Activated naive CD4-positive, alpha-beta T cell treated with anti-CD3 and anti-CD28 coated beads, Interleukin-2, amount 10 ng/mL, durations not matched to agents 7 days and 5 days (primary cell): ENCODE measurements at regions of chr17 and their contacts with region 1.

Region 1: GRCh38 chr17:59753522-59754467 is 46.3 kb downstream of the VMP1 start:
- DNase-seq: peak; percentile 37
- H3K4me3 Mint-ChIP-seq: peak overlapping the region; percentile 65
- H3K27ac Mint-ChIP-seq: peak overlapping the region; percentile 89
- H3K4me1 Mint-ChIP-seq: peaks cover 70% of the 10 kb centered on the region
- H3K27me3 Mint-ChIP-seq: no peaks in the 10 kb centered on the region

Region 2: DNA sequence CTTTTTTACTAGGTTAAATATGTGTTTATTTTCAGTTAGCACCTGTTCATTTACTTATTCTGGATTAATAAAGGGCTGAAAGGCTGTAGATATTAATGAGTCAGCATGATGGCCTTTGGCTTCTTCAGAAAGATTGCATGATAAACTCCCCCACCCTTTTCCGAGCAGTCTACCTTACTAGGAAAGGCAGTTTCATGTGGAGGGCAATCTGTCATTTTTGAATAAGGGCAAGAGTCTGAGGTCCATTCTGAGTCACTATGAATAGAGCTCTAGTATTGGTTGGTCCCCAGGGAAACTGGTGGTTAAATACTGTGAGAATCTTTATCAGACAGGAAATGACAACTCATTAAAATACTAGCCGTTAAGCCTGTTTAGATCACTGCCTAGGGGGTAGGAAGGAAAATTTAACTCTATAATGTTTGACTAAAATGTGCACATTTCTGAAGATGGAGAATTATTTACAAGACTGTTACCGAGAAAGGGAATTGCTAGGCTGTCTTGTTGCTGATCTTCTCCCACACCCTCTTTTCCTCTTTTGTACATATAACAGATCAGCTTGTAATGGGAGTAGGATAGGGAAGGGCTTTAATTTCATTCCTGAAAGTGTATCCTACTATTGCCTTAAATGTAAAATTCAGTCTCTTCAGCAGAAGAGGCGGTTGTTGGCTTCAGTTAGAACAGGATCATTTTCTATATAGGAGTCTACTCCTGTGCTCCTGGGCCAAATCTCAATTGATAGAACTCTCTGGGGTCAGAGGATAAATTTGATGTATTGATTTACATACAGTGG is 75.6 kb after region 1 on chr17:
- CTCF ChIA-PET with region 1: interaction called, 21 read pairs
- DNase-seq: peak; percentile 50
- H3K4me3 Mint-ChIP-seq: peak overlapping the region; percentile 75
- H3K27ac Mint-ChIP-seq: peak overlapping the region; percentile 98
- H3K4me1 Mint-ChIP-seq: peaks cover 83% of the 10 kb centered on the region
- H3K27me3 Mint-ChIP-seq: no peaks in the 10 kb centered on the region

Region 3: GRCh38 chr17:59846394-59847165 is 92.8 kb after region 1 on chr17:
- CTCF ChIA-PET with region 1: interaction called, 81 read pairs
- DNase-seq: no peak
- H3K4me3 Mint-ChIP-seq: peak overlapping the region; percentile 3
- H3K27ac Mint-ChIP-seq: peak overlapping the region; percentile 78
- H3K4me1 Mint-ChIP-seq: peaks cover 80% of the 10 kb centered on the region
- H3K27me3 Mint-ChIP-seq: no peaks in the 10 kb centered on the region